Astrocyte of the cerebellum (primary cell): ENCODE measurements at regions of chrX and their contacts with region 1.

Region 1: DNA sequence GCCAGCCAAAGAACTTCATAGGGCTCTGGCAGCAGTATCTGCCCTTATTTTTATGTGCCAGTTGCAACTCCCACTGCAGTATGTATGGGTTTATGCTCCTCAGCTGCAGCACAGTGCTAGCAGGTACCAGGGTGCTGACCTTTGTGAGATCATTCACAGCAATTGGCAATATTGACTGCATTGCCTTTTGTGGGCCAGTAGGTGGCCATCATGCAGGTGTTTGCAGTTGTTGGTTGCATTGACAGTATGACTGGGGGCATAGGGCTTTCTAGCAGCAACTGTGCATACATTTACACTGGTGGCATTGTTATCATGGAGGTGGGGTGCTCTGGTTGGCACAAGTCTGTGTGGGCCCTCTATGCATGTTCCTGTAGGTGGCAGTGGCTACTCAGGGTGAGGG is 42.5 kb downstream of the FAAH2 start:
- DNase-seq: no peak
- H3K4me3 ChIP-seq: no peak overlapping the region
- CTCF ChIP-seq: no peak

Region 2: GRCh38 chrX:57282568-57282967 is 46.4 kb before region 1 on chrX:
- in situ Hi-C with region 1: loop called (anchors 5 kb)
- DNase-seq: no peak
- H3K4me3 ChIP-seq: no peak overlapping the region
- CTCF ChIP-seq: no peak